Astrocyte of the cerebellum (primary cell): ENCODE measurements at regions of chr12 and their contacts with region 1.

Region 1: DNA sequence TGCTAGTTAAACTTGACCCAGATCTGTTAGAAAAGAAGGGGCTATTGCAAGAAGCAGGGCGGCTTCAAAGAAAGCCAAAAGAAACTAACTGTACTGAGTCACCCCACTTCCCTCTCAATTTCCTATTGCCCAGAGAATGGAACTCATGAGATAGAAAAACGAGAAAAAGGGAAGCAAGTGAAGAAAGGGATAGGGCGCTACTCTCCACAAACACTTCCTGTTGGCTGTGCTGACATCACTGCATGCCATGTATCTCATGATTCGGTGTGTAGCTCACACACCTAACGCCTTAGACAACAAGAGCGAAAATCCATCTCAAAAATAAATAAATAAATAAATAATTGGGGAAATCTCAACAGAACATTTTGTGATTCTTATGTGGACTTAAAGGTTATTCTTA is 13.0 kb upstream of the P2RX4 start:
- DNase-seq: no peak
- H3K4me3 ChIP-seq: no peak overlapping the region
- CTCF ChIP-seq: no peak

Region 2: DNA sequence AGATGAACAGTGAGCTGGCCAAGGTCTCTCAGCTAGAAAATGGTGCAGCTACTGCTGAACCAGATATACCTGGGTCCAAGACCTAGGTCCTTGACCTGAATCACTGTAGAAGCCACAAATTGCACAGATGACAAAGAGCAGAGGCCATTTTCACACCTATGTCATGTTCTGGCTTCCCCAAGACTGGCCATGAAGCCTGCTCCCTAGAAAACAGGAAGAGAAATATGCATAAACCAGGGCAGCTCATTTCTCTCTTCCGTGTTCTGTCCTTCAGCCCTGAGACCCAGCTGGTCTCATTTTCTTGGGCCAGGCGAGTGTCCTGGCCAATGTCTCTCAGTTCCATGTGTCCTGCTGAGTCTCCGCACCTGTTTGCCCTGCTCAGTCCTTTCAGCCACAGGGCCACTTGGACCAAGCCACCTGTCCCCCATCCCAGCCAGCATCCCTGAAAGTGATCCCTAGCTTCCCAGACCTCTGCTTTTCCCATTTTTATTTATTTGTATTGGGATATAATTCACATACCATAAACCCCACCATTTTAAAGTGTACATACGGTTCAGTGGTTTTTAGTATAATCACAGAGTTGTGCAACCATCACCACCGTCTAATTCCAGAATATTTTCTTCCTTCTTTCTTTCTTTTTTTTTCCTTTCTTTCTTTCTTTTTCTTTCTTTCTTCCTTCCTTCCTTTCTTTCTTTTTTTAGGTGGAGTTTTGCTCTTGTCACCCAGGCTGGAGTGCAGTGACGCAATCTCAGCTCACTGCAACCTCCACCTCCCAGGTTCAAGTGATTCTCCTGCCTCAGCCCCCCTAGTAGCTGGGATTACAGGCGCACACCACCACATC is 37.2 kb before region 1 on chr12:
- in situ Hi-C with region 1: loop called (anchors 5 kb)
- DNase-seq: no peak
- H3K4me3 ChIP-seq: no peak overlapping the region
- CTCF ChIP-seq: no peak